Ascending aorta (tissue), 2 donors: ENCODE measurements at regions of chr1 and their contacts with region 1.

Region 1: DNA sequence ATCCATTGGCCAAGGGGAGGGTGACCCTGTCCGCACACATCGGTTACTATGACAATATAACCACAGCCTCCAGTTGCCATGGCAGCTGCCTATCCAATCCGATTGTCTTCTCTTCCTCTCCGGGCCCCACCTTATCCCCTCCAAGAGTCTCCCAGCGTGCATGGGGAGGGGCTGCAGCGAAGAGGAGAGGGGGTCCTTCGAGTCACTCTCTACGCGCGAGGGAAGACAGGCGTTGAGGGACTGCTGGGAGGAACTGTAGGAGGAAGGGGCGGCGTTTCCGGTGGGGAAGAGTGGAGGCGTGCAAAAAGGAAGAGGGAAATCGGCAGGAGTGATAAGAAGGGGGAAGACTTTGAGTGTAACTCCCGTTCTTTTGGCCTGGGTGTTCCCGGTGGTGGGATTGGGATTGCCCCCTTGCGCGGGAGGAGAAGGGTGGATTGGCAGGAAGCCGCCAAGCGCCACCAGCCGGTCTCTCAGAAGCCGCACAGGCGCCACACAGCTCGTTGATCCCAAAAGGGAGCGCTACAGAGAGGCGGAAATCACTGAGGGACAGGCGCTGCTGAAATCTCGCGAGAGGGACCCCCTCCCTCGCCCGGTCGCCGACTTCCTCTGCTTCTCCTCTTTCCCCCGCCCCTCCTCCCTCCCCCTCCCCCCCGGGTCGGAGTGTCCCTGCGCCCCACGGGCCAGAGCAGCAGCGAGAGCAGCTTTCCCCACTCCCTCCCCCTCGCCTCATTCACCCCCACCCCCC is 384 bp upstream of the SMG7 start:
- DNase-seq: peak; percentile 93 to 99
- H3K4me3 ChIP-seq: peak overlapping the region; percentile 64 to 95
- H3K27ac ChIP-seq: peak overlapping the region; percentile 88 to 89
- H3K4me1 ChIP-seq: peaks cover 5 to 12% of the 10 kb centered on the region in 2 donors
- H3K27me3 ChIP-seq: no peaks in the 10 kb centered on the region
- CTCF ChIP-seq: no peak

Region 2: DNA sequence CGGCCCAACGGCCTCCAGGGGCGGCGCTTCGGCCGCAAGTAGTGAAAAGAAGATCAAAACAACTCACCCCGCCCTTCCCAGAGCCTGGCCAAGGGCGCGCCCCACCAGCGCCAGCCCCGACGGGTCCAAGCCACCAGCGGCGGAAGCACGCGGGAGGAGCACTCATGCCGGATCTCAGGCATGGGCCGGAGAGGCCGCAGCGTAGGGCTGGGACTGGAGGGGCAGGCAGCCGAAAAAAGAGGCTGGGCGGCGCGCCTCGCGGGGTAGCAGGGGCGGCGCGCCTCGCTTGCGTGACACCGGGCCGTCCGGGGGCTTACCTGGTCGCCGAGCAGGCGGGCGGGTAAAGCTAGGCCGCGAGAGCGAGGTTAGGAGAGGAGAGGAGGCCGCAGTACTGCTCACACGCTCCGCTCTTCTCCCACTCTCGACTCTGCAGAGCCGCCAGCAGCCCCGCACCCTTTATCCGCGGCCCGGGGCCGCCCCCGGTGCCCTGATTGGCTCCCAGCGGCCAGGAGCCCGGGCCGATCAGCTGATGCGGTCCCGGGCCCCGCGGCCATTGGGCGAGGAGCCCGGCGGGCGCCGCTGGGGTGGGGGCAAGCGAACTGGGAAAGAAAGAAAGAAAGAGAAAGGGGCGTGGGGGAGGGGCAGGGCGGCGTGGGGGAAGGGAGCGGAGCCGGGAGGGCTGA is 1080.4 kb before region 1 on chr1 and contains the start of gene GLUL:
- intact Hi-C with region 1: loop called (anchors 5 kb)
- DNase-seq: peak; percentile 91 to 96
- H3K4me3 ChIP-seq: peak within 1 kb of the TSS; percentile 90 to 92
- H3K27ac ChIP-seq: peak within 1 kb of the TSS; percentile 94 to 98
- H3K4me1 ChIP-seq: peaks cover 4 to 18% of the 10 kb centered on the region in 2 donors
- H3K27me3 ChIP-seq: no peaks in the 10 kb centered on the region
- CTCF ChIP-seq: peak in 1 of 3 experiments; percentile 14
- total RNA-seq, gene GLUL: 1,017 TPM

Region 3: GRCh38 chr1:182962554-182963115 is 509.3 kb before region 1 on chr1:
- intact Hi-C with region 1: loop called (anchors 5 kb)
- DNase-seq: peak in 1 of 2 donors; percentile 90
- H3K4me3 ChIP-seq: peak overlapping the region; percentile 32 to 33
- H3K27ac ChIP-seq: peak overlapping the region in 1 of 2 donors; percentile 12
- H3K4me1 ChIP-seq: peaks cover 0 to 2% of the 10 kb centered on the region in 2 donors
- H3K27me3 ChIP-seq: no peaks in the 10 kb centered on the region
- CTCF ChIP-seq: peak; percentile 91 to 92 (median 91)

Region 4: GRCh38 chr1:183318433-183318832 is 153.5 kb before region 1 on chr1:
- intact Hi-C with region 1: loop called (anchors 5 kb)
- DNase-seq: peak; percentile 55 to 92
- H3K4me3 ChIP-seq: no peak overlapping the region
- H3K27ac ChIP-seq: peak overlapping the region; percentile 69 to 82
- H3K4me1 ChIP-seq: peaks cover 0 to 19% of the 10 kb centered on the region in 2 donors
- H3K27me3 ChIP-seq: no peaks in the 10 kb centered on the region
- CTCF ChIP-seq: peak; percentile 75 to 78 (median 77)

Region 5: GRCh38 chr1:183635606-183636333 is 163.9 kb after region 1 on chr1 and contains the start of gene ARPC5:
- intact Hi-C with region 1: loop called (anchors 1 kb)
- DNase-seq: peak; percentile 85 to 97
- H3K4me3 ChIP-seq: peak within 1 kb of the TSS; percentile 93 to 97
- H3K27ac ChIP-seq: peak within 1 kb of the TSS; percentile 95 to 99
- H3K4me1 ChIP-seq: peaks cover 0 to 6% of the 10 kb centered on the region in 2 donors
- H3K27me3 ChIP-seq: no peaks in the 10 kb centered on the region
- CTCF ChIP-seq: no peak
- total RNA-seq, gene ARPC5: 48.3 TPM

Region 6: DNA sequence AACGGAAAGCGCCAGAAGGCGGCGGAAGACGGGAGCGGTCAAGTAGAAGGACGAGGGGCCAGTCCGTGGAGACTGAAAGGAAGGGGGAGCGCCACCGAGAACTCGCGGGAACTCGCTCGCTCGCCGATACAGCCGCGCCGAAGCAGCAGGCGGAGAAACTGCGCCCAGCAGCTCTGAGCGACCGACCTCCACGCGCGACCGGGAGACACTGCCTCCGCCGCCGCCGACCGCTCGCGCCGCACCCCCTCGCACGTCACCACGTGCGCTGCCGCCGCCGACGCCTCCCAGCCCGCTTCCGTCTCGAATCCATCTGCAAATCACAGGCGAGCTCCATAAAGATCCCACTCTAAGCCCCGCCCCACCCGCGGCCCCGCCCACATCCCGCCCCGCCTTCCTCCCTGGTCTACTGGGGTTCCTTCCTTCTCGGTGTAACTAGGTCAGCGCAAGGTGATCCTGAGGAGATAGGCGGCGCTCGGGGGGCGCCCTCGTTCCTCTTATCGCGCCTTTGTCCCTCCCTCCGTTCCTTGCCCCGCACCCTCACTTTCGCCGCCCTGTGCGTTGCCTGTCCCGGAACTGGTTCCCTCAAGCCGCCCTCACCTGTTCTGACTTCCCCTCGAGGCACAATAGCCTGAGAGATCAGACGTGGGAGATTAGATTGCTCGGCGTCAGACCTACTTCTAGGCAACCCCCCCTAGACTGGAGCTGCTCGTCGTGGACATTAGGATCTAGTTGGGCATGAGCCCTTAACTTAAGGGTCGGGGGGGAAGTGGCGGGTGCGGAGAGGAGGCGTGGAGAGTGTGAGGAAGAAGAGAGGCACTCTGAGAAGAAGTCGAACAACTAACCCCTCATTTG is 1845.3 kb after region 1 on chr1 and contains the start of gene IVNS1ABP:
- intact Hi-C with region 1: loop called (anchors 5 kb)
- DNase-seq: peak; percentile 86 to 97
- H3K4me3 ChIP-seq: peak within 1 kb of the TSS; percentile 87 to 98
- H3K27ac ChIP-seq: peak within 1 kb of the TSS; percentile 96 to 98
- H3K4me1 ChIP-seq: peaks cover 0 to 17% of the 10 kb centered on the region in 2 donors
- H3K27me3 ChIP-seq: no peaks in the 10 kb centered on the region
- CTCF ChIP-seq: peak in 2 of 3 experiments; percentile 12 to 35
- total RNA-seq, gene IVNS1ABP: 61.0 TPM